Sigmoid colon (tissue), 7 donors: ENCODE measurements at regions of chr4 and their contacts with region 1.

Region 1: DNA sequence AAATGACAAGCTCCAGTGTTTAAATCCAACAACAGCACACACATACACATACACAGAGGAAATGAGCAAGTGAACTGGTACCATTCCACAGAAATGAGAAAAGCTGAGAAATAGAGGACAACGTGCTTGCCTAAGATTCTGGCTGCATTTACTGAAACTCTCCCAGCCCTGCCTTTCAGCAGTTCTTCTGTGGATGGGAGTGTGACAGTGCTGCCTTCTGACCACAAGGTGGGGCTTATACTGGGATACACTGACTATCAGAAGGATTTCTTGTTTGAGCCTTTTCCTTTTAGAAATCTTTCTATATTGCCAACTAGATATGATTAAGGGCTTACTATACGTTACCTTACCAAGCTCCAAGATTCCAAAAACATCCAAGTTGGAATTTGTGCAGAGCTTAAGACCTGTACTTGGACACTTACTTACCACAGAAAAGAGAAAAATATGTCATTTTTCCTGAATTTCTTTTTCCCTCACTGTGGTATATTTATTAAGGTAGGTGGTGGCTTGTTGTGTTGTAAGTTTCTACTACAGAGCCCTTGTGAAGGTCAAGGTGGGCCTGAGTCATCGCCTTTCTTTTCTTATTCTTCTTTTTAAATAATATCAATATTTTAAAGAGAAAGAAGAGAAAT is 10.7 kb upstream of the CXCL8 start:
- DNase-seq: peak; percentile 85
- H3K4me3 ChIP-seq: no peak overlapping the region
- H3K27ac ChIP-seq: no peak overlapping the region
- H3K4me1 ChIP-seq: peaks cover 0 to 35% (median 28%) of the 10 kb centered on the region in 4 donors
- H3K27me3 ChIP-seq: no peaks in the 10 kb centered on the region
- CTCF ChIP-seq: peak; percentile 52 to 79 (median 74)
- EP300 ChIP-seq: no peak
- POLR2A ChIP-seq: no peak

Region 2: GRCh38 chr4:73662709-73663546 is 66.7 kb before region 1 on chr4:
- intact Hi-C with region 1: loop called (anchors 5 kb)
- DNase-seq: no peak
- H3K4me3 ChIP-seq: no peak overlapping the region
- H3K27ac ChIP-seq: no peak overlapping the region
- H3K4me1 ChIP-seq: no peaks in the 10 kb centered on the region
- H3K27me3 ChIP-seq: no peaks in the 10 kb centered on the region
- CTCF ChIP-seq: peak in 3 of 4 experiments; percentile 43 to 55 (median 48)
- EP300 ChIP-seq: no peak
- POLR2A ChIP-seq: no peak

Region 3: DNA sequence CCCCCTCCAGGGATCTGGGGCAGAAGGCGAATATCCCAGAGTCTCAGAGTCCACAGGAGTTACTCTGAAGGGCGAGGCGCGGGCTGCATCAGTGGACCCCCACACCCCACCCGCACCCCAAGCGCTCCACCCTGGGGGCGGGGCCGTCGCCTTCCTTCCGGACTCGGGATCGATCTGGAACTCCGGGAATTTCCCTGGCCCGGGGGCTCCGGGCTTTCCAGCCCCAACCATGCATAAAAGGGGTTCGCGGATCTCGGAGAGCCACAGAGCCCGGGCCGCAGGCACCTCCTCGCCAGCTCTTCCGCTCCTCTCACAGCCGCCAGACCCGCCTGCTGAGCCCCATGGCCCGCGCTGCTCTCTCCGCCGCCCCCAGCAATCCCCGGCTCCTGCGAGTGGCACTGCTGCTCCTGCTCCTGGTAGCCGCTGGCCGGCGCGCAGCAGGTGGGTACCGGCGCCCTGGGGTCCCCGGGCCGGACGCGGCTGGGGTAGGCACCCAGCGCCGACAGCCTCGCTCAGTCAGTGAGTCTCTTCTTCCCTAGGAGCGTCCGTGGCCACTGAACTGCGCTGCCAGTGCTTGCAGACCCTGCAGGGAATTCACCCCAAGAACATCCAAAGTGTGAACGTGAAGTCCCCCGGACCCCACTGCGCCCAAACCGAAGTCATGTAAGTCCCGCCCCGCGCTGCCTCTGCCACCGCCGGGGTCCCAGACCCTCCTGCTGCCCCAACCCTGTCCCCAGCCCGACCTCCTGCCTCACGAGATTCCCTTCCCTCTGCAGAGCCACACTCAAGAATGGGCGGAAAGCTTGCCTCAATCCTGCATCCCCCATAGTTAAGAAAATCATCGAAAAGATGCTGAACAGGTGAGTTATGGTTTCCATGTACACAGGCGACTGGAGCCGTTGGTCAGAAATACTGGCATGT is 139.7 kb after region 1 on chr4 and contains the start of gene CXCL1:
- intact Hi-C with region 1: loop called (anchors 10 kb)
- DNase-seq: peak; percentile 71
- H3K4me3 ChIP-seq: peak within 1 kb of the TSS; percentile 58 to 74 (median 64)
- H3K27ac ChIP-seq: peak within 1 kb of the TSS; percentile 35 to 79 (median 48)
- H3K4me1 ChIP-seq: peaks cover 0 to 18% (median 9%) of the 10 kb centered on the region in 4 donors
- H3K27me3 ChIP-seq: peaks cover 0 to 17% (median 0%) of the 10 kb centered on the region in 3 donors
- CTCF ChIP-seq: no peak
- EP300 ChIP-seq: no peak
- POLR2A ChIP-seq: no peak
- total RNA-seq, gene CXCL1: 1.5 to 6.8 (median 4.0) TPM

Region 4: DNA sequence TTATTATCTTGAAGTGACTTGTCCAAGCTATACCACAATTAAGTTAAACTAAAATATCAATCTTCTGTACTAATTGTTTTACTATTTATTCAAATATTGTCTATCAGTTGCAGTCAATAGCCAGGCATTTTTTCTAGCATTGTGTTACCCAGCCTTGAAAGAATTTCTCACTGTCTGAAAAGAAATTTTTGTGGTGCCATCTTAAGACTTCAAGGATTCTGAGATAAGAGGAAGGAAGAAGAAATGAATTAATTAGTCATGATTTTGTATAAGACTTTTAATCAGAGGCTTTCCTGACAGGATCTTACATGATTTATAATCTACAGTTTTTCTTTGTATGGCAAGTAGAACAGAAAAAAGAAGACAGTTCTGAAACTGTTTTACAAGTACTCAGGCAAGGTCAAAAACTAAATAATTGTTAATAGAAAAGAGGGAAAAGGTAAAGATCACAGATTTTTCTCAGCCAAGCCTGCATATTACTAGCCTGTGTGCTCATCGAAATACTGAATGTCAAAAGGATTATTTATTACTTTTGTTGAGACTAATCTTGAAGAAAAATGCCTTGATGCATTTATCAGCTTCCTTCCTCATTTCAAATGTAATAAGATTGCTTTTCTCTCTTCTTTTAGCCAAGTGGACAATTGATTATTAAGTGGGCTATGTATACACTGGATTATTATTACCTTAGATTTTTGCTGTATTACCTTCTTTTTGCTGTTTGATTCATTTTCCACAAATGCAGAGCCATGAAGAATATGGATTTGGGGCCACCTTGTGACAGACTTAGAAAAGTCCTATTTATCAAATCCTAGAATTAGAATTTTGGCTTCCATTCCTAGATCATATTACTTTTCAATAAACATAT is 193.3 kb after region 1 on chr4:
- intact Hi-C with region 1: loop called (anchors 2 kb)
- DNase-seq: no peak
- H3K4me3 ChIP-seq: no peak overlapping the region
- H3K27ac ChIP-seq: no peak overlapping the region
- H3K4me1 ChIP-seq: peaks cover 0 to 12% (median 4%) of the 10 kb centered on the region in 4 donors
- H3K27me3 ChIP-seq: no peaks in the 10 kb centered on the region
- CTCF ChIP-seq: no peak
- EP300 ChIP-seq: no peak
- POLR2A ChIP-seq: no peak